WTC11 (cell line): ENCODE measurements at regions of chr16 and their contacts with region 1.

Region 1: GRCh38 chr16:30953511-30954124 is 3.9 kb upstream of the SETD1A start:
- DNase-seq: peak; percentile 91
- ATAC-seq: peak; percentile 66
- H3K4me3 Mint-ChIP-seq: no peak overlapping the region
- H3K27ac Mint-ChIP-seq: no peak overlapping the region
- H3K4me1 Mint-ChIP-seq: peaks cover 19% of the 10 kb centered on the region
- H3K27me3 Mint-ChIP-seq: peaks cover 3% of the 10 kb centered on the region; the same call in 1 of the 2 replicates
- CTCF ChIP-seq: peak; percentile 64; the same call in 1 of the 2 replicates

Region 2: DNA sequence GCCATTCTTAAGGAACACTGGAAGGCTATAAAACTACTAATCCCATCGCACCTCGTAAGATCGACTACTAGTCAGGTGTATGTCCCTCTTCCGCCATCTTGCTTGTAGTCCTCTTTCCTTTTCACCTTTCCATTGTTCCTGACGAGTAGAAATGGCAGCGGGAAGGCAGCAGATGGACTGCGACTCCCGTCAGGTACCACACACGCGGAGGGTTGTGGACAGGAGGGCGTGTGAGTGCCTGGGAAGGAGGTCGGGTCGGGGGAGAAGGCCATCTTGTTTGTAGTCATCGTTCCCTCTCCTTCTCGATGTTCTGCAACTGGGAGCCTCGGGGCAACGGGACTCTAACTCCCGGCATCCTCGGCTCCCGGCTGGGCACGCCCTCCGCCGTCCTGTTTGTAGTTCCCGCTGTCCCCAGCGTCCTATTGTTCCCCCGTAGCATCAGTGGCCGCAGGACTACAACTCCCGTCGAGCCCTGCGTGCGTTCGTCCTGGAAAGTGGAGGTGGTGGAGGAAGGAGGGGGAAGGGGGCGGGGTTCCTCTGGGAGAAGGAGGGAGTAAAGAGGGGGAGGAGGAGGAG is 30.6 kb before region 1 on chr16:
- CTCF ChIA-PET with region 1: interaction called, 15 read pairs
- POLR2A ChIA-PET with region 1: no interaction called
- DNase-seq: peak; percentile 99
- ATAC-seq: peak; percentile 60
- H3K4me3 Mint-ChIP-seq: peak overlapping the region; percentile 99
- H3K27ac Mint-ChIP-seq: peak overlapping the region; percentile 100
- H3K4me1 Mint-ChIP-seq: peaks cover 20% of the 10 kb centered on the region
- H3K27me3 Mint-ChIP-seq: no peaks in the 10 kb centered on the region; the same call in 1 of the 2 replicates
- CTCF ChIP-seq: no peak

Region 3: DNA sequence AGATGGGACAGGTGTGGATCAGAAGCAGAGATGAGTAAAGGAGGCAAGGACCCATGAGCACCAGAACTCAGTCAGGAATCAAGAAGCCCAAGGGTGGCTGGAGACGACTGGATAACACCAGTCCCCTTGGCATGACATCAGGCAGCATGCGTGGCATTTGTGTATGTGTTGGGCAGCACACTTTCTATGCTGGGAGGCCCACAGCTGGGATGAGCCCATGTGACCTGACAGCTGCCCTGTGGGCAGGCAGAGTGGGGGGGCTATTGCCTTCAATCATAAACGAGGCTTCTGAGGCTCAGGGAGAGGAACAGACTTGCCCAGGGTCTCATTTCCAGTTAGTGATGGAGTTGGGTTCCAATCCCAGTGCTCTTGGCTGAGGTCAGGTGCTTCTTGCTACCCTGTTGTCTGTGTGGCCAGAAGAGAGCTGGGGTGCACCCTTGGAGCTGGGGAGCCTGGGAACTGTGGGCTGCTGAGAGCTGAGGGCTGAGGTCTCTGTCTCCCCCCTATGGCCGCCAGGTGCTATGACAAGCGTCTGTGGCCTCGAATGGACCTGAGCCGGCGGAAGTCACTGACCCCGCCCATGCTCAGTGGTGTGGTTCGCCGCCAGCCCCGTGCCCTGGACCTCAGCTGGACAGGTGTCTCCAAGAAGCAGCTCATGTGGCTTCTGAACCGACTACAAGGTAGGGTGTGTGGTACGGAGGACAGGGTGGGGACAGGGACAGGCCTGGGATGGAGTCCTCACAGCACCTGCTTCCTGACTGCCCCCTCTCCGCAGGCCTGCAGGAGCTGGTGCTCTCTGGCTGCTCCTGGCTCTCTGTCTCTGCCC is 11.8 kb before region 1 on chr16:
- CTCF ChIA-PET with region 1: interaction called, 54 read pairs
- POLR2A ChIA-PET with region 1: interaction called, 8 read pairs
- DNase-seq: peak; percentile 82
- ATAC-seq: peak; percentile 97
- H3K4me3 Mint-ChIP-seq: no peak overlapping the region
- H3K27ac Mint-ChIP-seq: no peak overlapping the region
- H3K4me1 Mint-ChIP-seq: peaks cover 13% of the 10 kb centered on the region
- H3K27me3 Mint-ChIP-seq: no peaks in the 10 kb centered on the region
- CTCF ChIP-seq: peak; percentile 81

Region 4: GRCh38 chr16:30977502-30977901 is 23.9 kb after region 1 on chr16:
- CTCF ChIA-PET with region 1: interaction called, 12 read pairs
- POLR2A ChIA-PET with region 1: no interaction called
- DNase-seq: peak; percentile 73
- ATAC-seq: peak; percentile 72
- H3K4me3 Mint-ChIP-seq: no peak overlapping the region
- H3K27ac Mint-ChIP-seq: peak overlapping the region; percentile 11; the same call in 1 of the 2 replicates
- H3K4me1 Mint-ChIP-seq: no peaks in the 10 kb centered on the region
- H3K27me3 Mint-ChIP-seq: peaks cover 2% of the 10 kb centered on the region; the same call in 1 of the 2 replicates
- CTCF ChIP-seq: peak; percentile 66

Region 5: GRCh38 chr16:30997000-30997886 is 43.6 kb after region 1 on chr16:
- CTCF ChIA-PET with region 1: interaction called, 15 read pairs
- POLR2A ChIA-PET with region 1: interaction called, 3 read pairs
- DNase-seq: peak; percentile 87
- ATAC-seq: peak; percentile 89
- H3K4me3 Mint-ChIP-seq: peak overlapping the region; percentile 70
- H3K27ac Mint-ChIP-seq: no peak overlapping the region; the same call in 1 of the 2 replicates
- H3K4me1 Mint-ChIP-seq: peaks cover 16% of the 10 kb centered on the region
- H3K27me3 Mint-ChIP-seq: peaks cover 7% of the 10 kb centered on the region; the same call in 1 of the 2 replicates
- CTCF ChIP-seq: no peak

Region 6: DNA sequence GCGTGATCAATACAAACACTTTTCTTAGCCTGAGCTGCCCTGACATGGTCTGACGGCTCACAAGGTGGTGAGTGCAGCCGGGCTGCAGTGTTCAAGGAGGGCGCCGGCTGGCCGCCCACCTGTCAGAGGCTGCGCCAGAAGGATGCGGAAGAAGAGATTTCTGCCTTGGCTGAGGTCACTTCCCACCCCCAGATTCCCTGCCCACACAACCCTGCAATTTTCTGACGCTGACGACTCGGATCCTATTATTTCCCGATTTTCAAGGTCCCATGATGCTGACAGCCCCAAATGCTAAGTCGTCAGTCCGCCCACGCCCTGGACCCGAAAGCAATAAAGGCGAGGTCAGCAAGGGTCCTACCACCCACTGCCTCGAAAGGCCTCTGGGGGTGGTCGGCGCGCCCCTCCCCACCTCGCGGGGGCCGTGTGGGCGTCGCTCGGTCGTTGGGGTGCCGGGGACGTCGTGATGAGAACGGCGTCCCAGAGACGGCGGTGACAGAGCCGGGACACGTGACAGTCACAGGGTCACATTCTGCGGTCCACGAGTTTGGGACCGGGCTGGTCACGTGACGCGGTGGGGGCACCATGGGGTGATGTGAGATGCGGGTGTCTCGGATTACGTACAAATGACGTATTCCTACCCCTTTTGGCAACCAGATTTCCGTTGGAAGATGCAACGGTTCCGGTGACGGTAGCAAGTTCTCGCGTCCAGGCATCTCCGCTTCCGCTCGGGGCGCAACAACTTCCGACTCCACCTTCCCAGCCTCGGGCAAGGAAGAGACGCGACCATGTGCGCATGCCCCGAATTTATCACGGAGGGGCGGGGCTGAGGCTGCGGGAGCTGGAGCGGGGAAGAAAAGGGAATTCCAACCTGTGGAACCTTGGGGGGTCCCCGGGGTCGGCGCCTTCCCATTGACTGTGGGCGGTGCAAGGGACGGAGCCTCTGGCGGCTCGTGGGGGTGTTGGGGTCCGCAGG is 79.4 kb after region 1 on chr16 and contains the start of gene STX4:
- CTCF ChIA-PET with region 1: interaction called, 10 read pairs
- POLR2A ChIA-PET with region 1: no interaction called
- DNase-seq: peak; percentile 96
- ATAC-seq: peak; percentile 86
- H3K4me3 Mint-ChIP-seq: peak within 1 kb of the TSS; percentile 90
- H3K27ac Mint-ChIP-seq: peak within 1 kb of the TSS; percentile 70
- H3K4me1 Mint-ChIP-seq: no peaks in the 10 kb centered on the region
- H3K27me3 Mint-ChIP-seq: no peaks in the 10 kb centered on the region; the same call in 1 of the 2 replicates
- CTCF ChIP-seq: no peak
- total RNA-seq, gene STX4: 31.3 to 38.4 TPM (median 32.5 TPM) in 3 replicates

Region 7: GRCh38 chr16:31127186-31127585 is 173.6 kb after region 1 on chr16:
- CTCF ChIA-PET with region 1: no interaction called
- POLR2A ChIA-PET with region 1: no interaction called
- DNase-seq: no peak
- ATAC-seq: no peak
- H3K4me3 Mint-ChIP-seq: no peak overlapping the region
- H3K27ac Mint-ChIP-seq: 0 out of 2 replicates have a peak overlapping the region, but pooled peaks have one; percentile 60
- H3K4me1 Mint-ChIP-seq: peaks cover 20% of the 10 kb centered on the region
- H3K27me3 Mint-ChIP-seq: no peaks in the 10 kb centered on the region
- CTCF ChIP-seq: no peak